A549 (cell line): ENCODE measurements at regions of chr2 and their contacts with region 1.

Region 1: GRCh38 chr2:63861220-63861822 is 19.6 kb downstream of the UGP2 start:
- DNase-seq: peak; percentile 32 to 77
- ATAC-seq: peak; percentile 39 to 83; a peak in 5 of 6 replicates
- H3K4me3 ChIP-seq: no peak overlapping the region
- H3K27ac ChIP-seq: no peak overlapping the region
- H3K4me1 ChIP-seq: peaks cover 29% of the 10 kb centered on the region
- CTCF ChIP-seq: peak; percentile 88
- EP300 ChIP-seq: no peak
- POLR2A ChIP-seq: no peak
- RAD21 ChIP-seq: peak; percentile 85 to 87

Region 2: GRCh38 chr2:63569740-63570139 is 291.6 kb before region 1 on chr2:
- CTCF ChIA-PET with region 1: no interaction called
- POLR2A ChIA-PET with region 1: no interaction called
- DNase-seq: no peak
- ATAC-seq: no peak
- H3K4me3 ChIP-seq: no peak overlapping the region
- H3K27ac ChIP-seq: no peak overlapping the region
- H3K4me1 ChIP-seq: no peaks in the 10 kb centered on the region
- CTCF ChIP-seq: no peak
- EP300 ChIP-seq: no peak
- POLR2A ChIP-seq: no peak
- RAD21 ChIP-seq: no peak

Region 3: DNA sequence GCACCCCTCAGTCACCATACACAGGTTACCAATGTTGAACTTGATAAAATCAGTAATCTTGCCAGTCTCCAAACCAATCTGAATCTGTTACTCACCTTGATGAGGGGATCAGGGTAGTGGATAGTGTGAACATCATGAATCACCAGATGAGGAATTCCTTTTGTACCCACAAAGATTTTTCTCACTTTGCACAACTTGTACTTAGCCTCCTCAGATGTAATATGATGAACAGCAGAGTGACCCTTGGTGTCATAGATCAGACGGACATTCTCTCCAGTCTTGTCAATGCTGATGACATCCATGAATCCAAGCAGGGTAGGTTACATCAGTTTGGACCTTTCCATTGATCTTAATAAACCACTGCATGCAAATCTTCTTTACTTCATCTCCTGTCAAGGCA is 217.8 kb before region 1 on chr2:
- CTCF ChIA-PET with region 1: no interaction called
- POLR2A ChIA-PET with region 1: no interaction called
- DNase-seq: no peak
- ATAC-seq: no peak
- H3K4me3 ChIP-seq: no peak overlapping the region
- H3K27ac ChIP-seq: no peak overlapping the region
- H3K4me1 ChIP-seq: no peaks in the 10 kb centered on the region
- CTCF ChIP-seq: no peak
- EP300 ChIP-seq: no peak
- POLR2A ChIP-seq: no peak
- RAD21 ChIP-seq: no peak

Region 4: DNA sequence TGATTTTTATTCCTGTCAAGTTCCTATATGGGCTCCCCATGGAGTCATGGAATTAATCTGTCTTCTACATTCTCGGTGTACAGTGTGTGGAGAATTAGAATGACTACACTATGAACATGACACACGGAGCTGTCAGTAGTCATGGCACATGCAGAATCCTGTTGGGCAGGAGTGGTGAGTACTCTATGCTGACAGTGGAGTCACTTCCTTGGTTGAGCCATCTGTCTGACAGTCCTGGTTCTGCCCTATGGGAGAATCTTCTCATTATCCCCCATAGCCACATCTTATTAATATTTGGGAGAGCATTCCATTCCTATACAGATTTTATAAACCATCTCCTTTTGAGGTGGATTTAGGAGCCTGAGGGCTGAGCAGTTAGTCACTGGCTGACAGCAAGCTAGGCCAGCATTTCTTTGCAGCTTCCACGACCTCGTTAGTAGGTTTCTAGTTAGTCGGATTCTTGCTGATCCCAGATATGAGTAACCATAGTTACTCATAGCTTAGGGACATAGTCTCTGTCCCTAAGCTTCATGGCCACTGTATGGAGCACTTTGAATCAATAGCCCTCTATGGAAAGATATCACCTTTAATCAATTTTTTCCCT is 182.0 kb before region 1 on chr2:
- CTCF ChIA-PET with region 1: interaction called, 12 read pairs
- POLR2A ChIA-PET with region 1: no interaction called
- DNase-seq: no peak
- ATAC-seq: no peak
- H3K4me3 ChIP-seq: no peak overlapping the region
- H3K27ac ChIP-seq: no peak overlapping the region
- H3K4me1 ChIP-seq: no peaks in the 10 kb centered on the region
- CTCF ChIP-seq: no peak
- EP300 ChIP-seq: no peak
- POLR2A ChIP-seq: no peak
- RAD21 ChIP-seq: no peak

Region 5: DNA sequence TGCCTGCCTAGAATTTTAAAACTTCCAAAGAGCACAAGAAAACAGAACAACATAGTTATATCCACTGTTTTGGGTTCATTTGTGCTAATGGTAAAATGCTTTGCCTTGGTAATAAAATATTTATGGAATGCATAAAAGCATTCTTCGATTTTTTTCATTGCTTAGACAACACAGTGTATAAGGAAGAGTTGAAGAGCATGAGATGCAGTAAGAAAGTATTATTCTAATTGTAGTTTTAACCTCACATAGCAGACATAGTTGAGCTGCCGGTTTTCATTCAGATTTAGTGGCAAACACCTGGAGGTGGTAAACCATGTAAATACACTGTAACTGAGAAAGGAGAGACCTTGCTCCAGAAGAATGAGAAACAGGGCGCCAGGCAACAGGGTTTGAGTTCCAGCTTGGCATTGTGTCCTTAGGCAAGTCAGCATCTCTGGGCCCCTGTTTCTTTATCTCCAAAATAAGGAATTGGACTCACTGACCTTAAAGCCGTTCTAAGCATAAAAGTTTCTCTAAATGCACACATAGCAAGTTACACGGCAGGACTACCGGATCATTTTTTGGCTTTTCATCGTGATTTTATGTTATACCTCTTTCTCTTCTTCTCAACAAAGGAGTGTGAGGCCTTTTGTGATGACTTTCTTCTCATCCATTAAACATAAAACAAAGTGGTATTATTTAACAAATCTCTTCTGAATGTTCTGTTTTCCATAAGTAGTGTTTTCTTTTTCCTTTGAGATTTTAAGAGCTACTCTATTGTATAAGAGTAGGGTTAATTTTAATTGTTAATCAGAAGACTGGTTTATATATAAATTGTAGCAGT is 11.7 kb before region 1 on chr2:
- CTCF ChIA-PET with region 1: interaction called, 56 read pairs
- POLR2A ChIA-PET with region 1: no interaction called
- DNase-seq: no peak
- ATAC-seq: no peak
- H3K4me3 ChIP-seq: no peak overlapping the region
- H3K27ac ChIP-seq: no peak overlapping the region; a peak in 1 of 6 replicates
- H3K4me1 ChIP-seq: peaks cover 30% of the 10 kb centered on the region
- CTCF ChIP-seq: no peak
- EP300 ChIP-seq: no peak
- POLR2A ChIP-seq: no peak
- RAD21 ChIP-seq: no peak

Region 6: GRCh38 chr2:63875131-63875527 is 13.8 kb after region 1 on chr2:
- CTCF ChIA-PET with region 1: interaction called, 12 read pairs
- POLR2A ChIA-PET with region 1: no interaction called
- DNase-seq: no peak
- ATAC-seq: no peak
- H3K4me3 ChIP-seq: no peak overlapping the region
- H3K27ac ChIP-seq: no peak overlapping the region
- H3K4me1 ChIP-seq: peaks cover 20% of the 10 kb centered on the region
- CTCF ChIP-seq: no peak
- EP300 ChIP-seq: no peak
- POLR2A ChIP-seq: no peak
- RAD21 ChIP-seq: no peak